IMR-90 (cell line): ENCODE measurements at regions of chr2 and their contacts with region 1.

Region 1: DNA sequence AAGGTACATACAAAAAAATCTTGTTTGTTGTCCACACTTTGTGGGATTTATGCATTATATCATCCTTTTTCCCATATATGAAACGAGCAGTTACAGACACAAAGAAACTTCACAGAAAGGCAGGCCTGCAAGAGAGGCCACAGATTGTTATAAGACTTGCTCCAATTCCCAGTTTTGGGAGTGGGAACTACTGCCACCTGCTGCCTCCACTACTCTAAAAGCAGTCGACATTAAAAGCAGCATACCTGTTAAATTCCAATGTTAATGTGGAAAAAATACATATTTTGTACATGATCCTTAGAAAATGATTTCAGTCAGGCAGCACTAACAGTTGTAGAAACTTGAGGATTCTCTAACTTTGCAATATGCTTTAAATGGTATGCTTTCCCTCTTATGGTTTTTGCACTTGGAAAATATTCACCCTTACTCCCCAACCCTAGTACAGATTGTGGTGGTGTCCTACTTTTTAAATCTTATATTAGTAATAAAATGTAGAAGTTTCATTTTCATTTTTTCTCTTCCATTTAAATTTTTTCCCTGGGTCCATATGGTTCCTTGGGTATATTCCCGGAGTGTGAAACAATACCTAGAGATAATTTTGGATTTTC is 37.9 kb downstream of the SLC38A11 start:
- DNase-seq: peak; percentile 36
- ATAC-seq: no peak
- H3K4me3 ChIP-seq: no peak overlapping the region
- H3K27ac ChIP-seq: no peak overlapping the region
- H3K4me1 ChIP-seq: peaks cover 5% of the 10 kb centered on the region
- H3K27me3 ChIP-seq: no peaks in the 10 kb centered on the region
- CTCF ChIP-seq: peak; percentile 48
- POLR2A ChIP-seq: no peak
- RAD21 ChIP-seq: peak; percentile 50

Region 2: GRCh38 chr2:164841719-164842623 is 75.4 kb before region 1 on chr2 and contains the start of gene COBLL1:
- CTCF ChIA-PET with region 1: interaction called, 4 read pairs
- POLR2A ChIA-PET with region 1: interaction called, 3 read pairs
- dilution Hi-C with region 1: no loop called
- in situ Hi-C with region 1: no loop called
- intact Hi-C with region 1: loop called (anchors 2 kb)
- DNase-seq: peak; percentile 41
- ATAC-seq: peak; percentile 78
- H3K4me3 ChIP-seq: peak within 1 kb of the TSS; percentile 86
- H3K27ac ChIP-seq: peak within 1 kb of the TSS; percentile 10; the same call in 1 of the 2 replicates
- H3K4me1 ChIP-seq: no peaks in the 10 kb centered on the region
- H3K27me3 ChIP-seq: peaks cover 6% of the 10 kb centered on the region
- CTCF ChIP-seq: peak; percentile 57
- POLR2A ChIP-seq: no peak
- RAD21 ChIP-seq: peak; percentile 14; the same call in 1 of the 2 replicates
- total RNA-seq, gene COBLL1: 1.1 and 2.2 TPM in 2 replicates